ENCODE measurements at regions of chr3 and their contacts with region 1.

Region 1: GRCh38 chr3:141164852-141165251 is 66.8 kb upstream of the PXYLP1 start:
- DNase-seq: no peak
- H3K4me3 Mint-ChIP-seq: no peak overlapping the region
- H3K27ac Mint-ChIP-seq: no peak overlapping the region
- H3K4me1 Mint-ChIP-seq: no peaks in the 10 kb centered on the region
- H3K27me3 Mint-ChIP-seq: peaks cover 4% of the 10 kb centered on the region

Region 2: GRCh38 chr3:140922634-140923033 is 242.2 kb before region 1 on chr3:
- CTCF ChIA-PET with region 1: no interaction called
- intact Hi-C with region 1: no loop called
- DNase-seq: no peak
- H3K4me3 Mint-ChIP-seq: no peak overlapping the region
- H3K27ac Mint-ChIP-seq: no peak overlapping the region
- H3K4me1 Mint-ChIP-seq: no peaks in the 10 kb centered on the region
- H3K27me3 Mint-ChIP-seq: peaks cover 5% of the 10 kb centered on the region

Region 3: GRCh38 chr3:141143517-141143916 is 21.3 kb before region 1 on chr3:
- CTCF ChIA-PET with region 1: no interaction called
- intact Hi-C with region 1: loop called (anchors 2 kb)
- DNase-seq: no peak
- H3K4me3 Mint-ChIP-seq: no peak overlapping the region
- H3K27ac Mint-ChIP-seq: no peak overlapping the region
- H3K4me1 Mint-ChIP-seq: no peaks in the 10 kb centered on the region
- H3K27me3 Mint-ChIP-seq: peaks cover 8% of the 10 kb centered on the region

Measured in activated naive CD4-positive, alpha-beta T cell treated with anti-CD3 and anti-CD28 coated beads for 36 hours (primary cell).